Motor neuron (in vitro differentiated cells): ENCODE measurements at regions of chr14 and their contacts with region 1.

Region 1: DNA sequence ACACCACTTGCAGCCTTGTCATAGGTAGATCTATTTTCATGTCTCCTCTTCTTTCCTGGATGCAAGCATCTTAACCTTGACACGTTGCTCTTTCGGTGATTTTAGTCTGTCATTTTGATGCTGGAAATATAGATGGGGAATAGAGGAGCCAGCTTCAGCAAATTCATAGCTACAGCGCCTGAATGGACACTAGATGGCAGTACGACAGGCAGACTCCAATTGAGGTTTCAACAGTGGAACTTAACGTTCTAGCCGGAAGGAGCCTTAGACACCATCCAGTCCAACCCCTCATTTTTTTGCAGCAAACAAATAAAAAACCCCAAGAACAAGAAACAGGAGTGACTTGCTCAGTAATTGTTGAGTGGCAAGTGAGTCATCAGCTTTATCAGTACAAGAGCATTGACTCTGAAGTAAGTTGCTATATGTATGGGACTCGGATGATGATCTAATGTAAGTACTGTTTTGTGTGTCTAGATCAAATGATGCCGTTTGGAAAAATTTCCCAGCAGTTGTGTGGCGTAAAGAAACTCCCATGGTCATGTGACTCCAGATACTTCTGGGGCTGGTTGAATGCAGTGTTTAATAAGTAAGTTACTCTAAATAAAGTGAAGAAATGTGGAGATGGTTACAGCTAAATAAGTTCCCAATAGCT is 9.0 kb downstream of the DMAC2L start:
- ATAC-seq: peak; percentile 87 to 98 (median 94)
- H3K4me3 ChIP-seq: peak overlapping the region in 2 of 5 donors; percentile 5 to 25
- H3K27ac ChIP-seq: no peak overlapping the region
- H3K4me1 ChIP-seq: peaks cover 4 to 10% of the 10 kb centered on the region in 2 donors

Region 2: GRCh38 chr14:50520947-50521815 is 200.0 kb after region 1 on chr14:
- in situ Hi-C with region 1: loop called in 4 of 9 experiments (anchors 10 to 25 kb)
- ATAC-seq: peak in 6 of 8 experiments; percentile 36 to 96 (median 91)
- H3K4me3 ChIP-seq: no peak overlapping the region
- H3K27ac ChIP-seq: no peak overlapping the region
- H3K4me1 ChIP-seq: no peaks in the 10 kb centered on the region

Region 3: GRCh38 chr14:50532502-50533240 is 211.5 kb after region 1 on chr14 and contains the start of gene MAP4K5:
- in situ Hi-C with region 1: loop called in 5 of 9 experiments (anchors 10 to 25 kb)
- ATAC-seq: peak; percentile 92 to 98 (median 98)
- H3K4me3 ChIP-seq: peak within 1 kb of the TSS; percentile 55 to 95 (median 80)
- H3K27ac ChIP-seq: peak within 1 kb of the TSS; percentile 85 to 96
- H3K4me1 ChIP-seq: peaks cover 7 to 15% of the 10 kb centered on the region in 2 donors
- total RNA-seq, gene MAP4K5: 31.6 to 69.8 (median 43.0) TPM